GM12878 (cell line): ENCODE measurements at regions of chr3 and their contacts with region 1.

Region 1: GRCh38 chr3:28328188-28329151 is 20.1 kb upstream of the ZCWPW2 start:
- DNase-seq: no peak
- ATAC-seq: peak; percentile 32; the same call in 2 of the 3 replicates
- H3K4me3 ChIP-seq: no peak overlapping the region
- H3K27ac ChIP-seq: no peak overlapping the region
- H3K4me1 ChIP-seq: no peaks in the 10 kb centered on the region
- H3K27me3 ChIP-seq: no peaks in the 10 kb centered on the region
- CTCF ChIP-seq: peak in 2 of 3 experiments; percentile 28 to 60; a peak in 4 of 6 replicates
- EP300 ChIP-seq: no peak
- POLR2A ChIP-seq: no peak
- RAD21 ChIP-seq: peak; percentile 49

Region 2: DNA sequence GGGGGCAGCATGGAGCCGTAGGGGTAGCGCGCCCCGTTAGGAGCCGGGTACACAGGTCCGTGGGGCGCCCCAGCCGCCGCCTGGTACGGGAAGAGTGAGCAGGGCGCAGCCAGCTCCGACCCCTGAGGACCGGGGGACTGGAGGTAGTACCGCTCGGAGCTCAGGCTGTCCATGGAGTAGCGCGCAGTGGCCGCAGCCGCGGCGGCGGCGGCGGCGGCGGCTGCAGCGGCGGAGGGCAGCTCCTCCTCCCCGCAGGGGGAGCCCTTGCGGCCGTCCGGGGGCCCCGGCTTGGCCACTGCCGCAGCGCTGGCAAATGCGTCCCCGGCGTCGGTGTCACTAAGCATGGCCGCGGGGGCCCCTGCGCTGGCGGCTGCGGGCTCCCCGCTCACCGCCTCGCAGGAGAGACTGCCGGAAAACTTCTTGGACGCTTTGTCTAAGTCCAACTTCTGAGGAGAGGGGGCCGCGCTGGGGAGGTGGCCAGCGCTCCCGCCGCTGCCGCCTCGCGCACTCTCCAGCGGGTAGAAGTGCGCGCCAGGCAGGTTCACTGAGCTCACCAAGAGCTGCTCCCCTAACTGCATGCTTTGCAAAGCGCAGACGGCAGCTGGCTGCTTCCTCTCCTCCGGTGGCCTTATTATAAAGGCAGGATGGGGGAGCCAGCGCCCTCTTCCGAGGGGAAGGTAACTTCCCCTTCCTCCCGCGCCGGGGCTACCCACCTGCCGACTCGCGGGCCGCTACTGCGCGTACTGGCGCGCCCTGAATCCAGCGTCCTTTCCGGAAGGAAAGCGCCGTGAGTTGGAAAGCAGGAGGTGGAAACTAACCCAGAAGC is 606.5 kb before region 1 on chr3 and contains the start of gene EOMES:
- CTCF ChIA-PET with region 1: interaction called, 122 read pairs
- POLR2A ChIA-PET with region 1: interaction called, 19 read pairs
- RAD21 ChIA-PET with region 1: interaction called, 170 read pairs
- SMC1A ChIA-PET with region 1: interaction called, 139 read pairs
- in situ Hi-C with region 1: no loop called
- intact Hi-C with region 1: no loop called
- DNase-seq: no peak
- ATAC-seq: peak; percentile 65
- H3K4me3 ChIP-seq: peak within 1 kb of the TSS; percentile 44; the same call in 1 of the 2 replicates
- H3K27ac ChIP-seq: no peak within 1 kb of the TSS
- H3K4me1 ChIP-seq: no peaks in the 10 kb centered on the region
- H3K27me3 ChIP-seq: peaks cover 2 to 14% of the 10 kb centered on the region in 2 experiments
- CTCF ChIP-seq: peak; percentile 10 to 61 (median 52); a peak in 5 of 6 replicates
- EP300 ChIP-seq: no peak
- POLR2A ChIP-seq: no peak
- RAD21 ChIP-seq: no peak
- polyA plus RNA-seq, gene EOMES: 1.5 to 2.8 TPM

Region 3: DNA sequence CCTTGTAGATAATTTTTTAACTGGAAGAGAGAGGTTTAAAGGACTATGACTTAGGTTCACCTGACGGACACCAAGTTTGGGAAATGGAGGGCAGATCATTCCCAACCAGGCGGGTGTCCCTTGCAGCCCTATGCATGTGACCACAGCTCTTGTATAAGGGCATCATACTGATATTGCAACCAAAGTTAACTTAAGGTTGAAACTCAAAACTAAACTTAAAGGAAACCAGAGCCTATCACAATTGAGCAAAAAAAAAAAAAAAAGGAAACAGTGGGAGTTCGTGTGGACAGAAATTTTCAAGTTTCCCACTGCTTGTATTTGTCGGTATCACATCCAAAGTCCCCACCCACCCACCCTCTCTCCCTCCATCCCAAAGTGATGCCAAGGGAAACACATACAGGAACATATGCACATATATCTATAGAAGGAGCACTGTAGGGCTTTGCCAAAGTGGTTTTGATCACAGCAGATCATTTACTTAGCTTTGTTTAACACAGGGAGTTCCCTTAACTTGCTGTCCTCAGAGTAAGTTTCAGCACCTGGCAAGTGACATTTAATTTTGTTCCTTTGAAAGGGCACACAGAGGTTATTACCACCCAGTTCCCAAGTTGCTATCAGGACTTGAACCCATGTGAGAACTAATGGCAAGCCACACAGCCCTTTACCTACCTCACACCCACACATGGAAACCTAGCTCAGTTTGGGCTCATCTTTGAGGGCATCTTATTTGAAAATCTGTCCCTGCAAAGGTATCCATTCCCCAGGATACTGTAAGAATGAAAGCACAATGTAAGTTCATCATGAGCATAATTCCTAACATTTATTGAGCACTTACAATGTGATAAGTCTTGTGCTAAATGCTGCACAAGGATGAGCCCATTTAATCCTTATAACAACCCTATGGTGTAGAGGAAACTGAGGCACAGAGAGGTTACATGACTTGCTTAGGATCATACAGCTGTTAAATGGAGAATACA is 291.6 kb before region 1 on chr3:
- CTCF ChIA-PET with region 1: interaction called, 5 read pairs
- POLR2A ChIA-PET with region 1: interaction called, 5 read pairs
- RAD21 ChIA-PET with region 1: interaction called, 5 read pairs
- SMC1A ChIA-PET with region 1: interaction called, 19 read pairs
- in situ Hi-C with region 1: no loop called
- intact Hi-C with region 1: no loop called
- DNase-seq: no peak
- ATAC-seq: peak; percentile 83
- H3K4me3 ChIP-seq: no peak overlapping the region
- H3K27ac ChIP-seq: no peak overlapping the region
- H3K4me1 ChIP-seq: no peaks in the 10 kb centered on the region
- H3K27me3 ChIP-seq: no peaks in the 10 kb centered on the region
- CTCF ChIP-seq: no peak
- EP300 ChIP-seq: peak in 1 of 2 experiments; percentile 34; a peak in 1 of 4 replicates
- POLR2A ChIP-seq: no peak
- RAD21 ChIP-seq: no peak

Region 4: DNA sequence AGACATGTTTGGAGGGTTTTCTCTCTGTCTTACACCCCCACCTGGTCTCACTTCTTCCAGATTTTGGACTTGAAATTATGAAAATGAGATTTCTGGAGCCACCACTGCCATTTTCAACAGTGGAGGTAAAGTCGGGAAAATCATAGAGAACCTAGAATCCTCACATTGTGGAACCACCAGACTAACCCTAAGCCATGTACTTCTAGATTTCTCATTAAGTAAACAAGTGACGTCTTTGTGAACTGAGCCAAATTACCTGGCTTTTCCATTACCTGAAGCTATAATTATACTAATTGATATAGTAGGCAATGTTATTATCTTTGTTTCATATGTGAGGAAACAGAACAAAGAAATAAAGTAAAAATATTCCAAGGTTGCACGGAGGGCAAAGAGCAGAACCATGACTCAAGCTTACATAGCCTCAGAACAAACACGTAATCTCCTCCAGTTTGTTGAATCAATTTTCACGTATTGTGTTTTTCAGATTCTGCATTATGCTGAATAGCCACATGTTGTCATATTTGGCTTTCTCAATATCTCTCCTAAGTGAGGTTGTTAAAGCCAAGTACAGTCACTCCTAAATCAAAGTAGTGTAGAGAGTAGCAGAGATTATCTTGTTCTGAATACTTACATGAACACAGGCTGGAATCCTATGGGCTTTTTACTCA is 188.4 kb before region 1 on chr3:
- CTCF ChIA-PET with region 1: no interaction called
- POLR2A ChIA-PET with region 1: no interaction called
- RAD21 ChIA-PET with region 1: interaction called, 23 read pairs
- SMC1A ChIA-PET with region 1: interaction called, 12 read pairs
- in situ Hi-C with region 1: no loop called
- intact Hi-C with region 1: no loop called
- DNase-seq: no peak
- ATAC-seq: peak; percentile 6
- H3K4me3 ChIP-seq: no peak overlapping the region
- H3K27ac ChIP-seq: no peak overlapping the region
- H3K4me1 ChIP-seq: no peaks in the 10 kb centered on the region
- H3K27me3 ChIP-seq: no peaks in the 10 kb centered on the region
- CTCF ChIP-seq: no peak
- EP300 ChIP-seq: no peak
- POLR2A ChIP-seq: no peak
- RAD21 ChIP-seq: no peak

Region 5: DNA sequence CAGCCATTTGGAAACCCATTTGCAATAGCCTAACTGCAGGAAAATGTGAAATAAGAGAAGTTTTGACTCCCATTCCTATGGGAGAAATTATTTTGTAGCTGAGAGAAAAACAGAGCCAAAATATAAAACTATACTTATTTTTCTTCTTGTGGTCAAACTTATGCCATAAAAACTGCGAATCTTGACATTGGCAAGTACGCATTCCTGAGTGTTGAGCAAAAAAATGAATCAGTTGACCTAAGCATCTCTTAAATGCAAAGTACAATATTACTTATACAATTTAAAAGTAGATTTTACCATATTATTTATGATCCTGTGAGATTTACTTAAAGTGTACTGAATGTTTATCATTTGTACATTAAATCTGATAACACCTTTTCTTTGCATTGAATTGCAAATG is 137.1 kb before region 1 on chr3:
- CTCF ChIA-PET with region 1: no interaction called
- POLR2A ChIA-PET with region 1: no interaction called
- RAD21 ChIA-PET with region 1: no interaction called
- SMC1A ChIA-PET with region 1: no interaction called
- in situ Hi-C with region 1: no loop called
- intact Hi-C with region 1: no loop called
- DNase-seq: no peak
- ATAC-seq: no peak
- H3K4me3 ChIP-seq: no peak overlapping the region
- H3K27ac ChIP-seq: no peak overlapping the region
- H3K4me1 ChIP-seq: no peaks in the 10 kb centered on the region
- H3K27me3 ChIP-seq: no peaks in the 10 kb centered on the region
- CTCF ChIP-seq: no peak
- EP300 ChIP-seq: no peak
- POLR2A ChIP-seq: no peak
- RAD21 ChIP-seq: no peak

Region 6: DNA sequence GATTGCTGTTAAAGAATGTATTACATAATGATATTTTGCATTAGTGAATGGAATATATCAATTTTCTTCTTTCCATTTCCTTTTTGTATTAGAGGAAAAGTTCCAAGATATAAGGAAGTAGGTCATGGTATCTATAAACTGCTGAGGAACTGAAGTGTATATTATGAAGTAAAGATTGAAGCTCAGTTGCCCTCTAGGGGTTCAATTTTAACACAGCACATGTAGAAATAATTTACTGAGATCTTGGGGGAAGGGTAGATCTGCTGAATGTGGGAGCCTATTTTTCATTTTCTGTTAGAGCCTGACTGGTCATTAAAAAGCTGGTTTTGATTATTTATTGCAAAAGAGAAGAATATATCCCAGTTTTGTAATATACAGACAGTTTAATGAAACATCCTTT is 41.9 kb before region 1 on chr3:
- CTCF ChIA-PET with region 1: interaction called, 34 read pairs
- POLR2A ChIA-PET with region 1: no interaction called
- RAD21 ChIA-PET with region 1: interaction called, 62 read pairs
- SMC1A ChIA-PET with region 1: interaction called, 37 read pairs
- in situ Hi-C with region 1: no loop called
- intact Hi-C with region 1: loop called (anchors 2 kb)
- DNase-seq: peak; percentile 8
- ATAC-seq: peak; percentile 96
- H3K4me3 ChIP-seq: no peak overlapping the region
- H3K27ac ChIP-seq: no peak overlapping the region
- H3K4me1 ChIP-seq: no peaks in the 10 kb centered on the region
- H3K27me3 ChIP-seq: no peaks in the 10 kb centered on the region
- CTCF ChIP-seq: peak; percentile 48 to 63 (median 50); a peak in 5 of 6 replicates
- EP300 ChIP-seq: no peak
- POLR2A ChIP-seq: no peak
- RAD21 ChIP-seq: peak; percentile 73

Region 7: GRCh38 chr3:28343144-28343543 is 14.7 kb after region 1 on chr3:
- CTCF ChIA-PET with region 1: interaction called, 47 read pairs
- POLR2A ChIA-PET with region 1: interaction called, 12 read pairs
- RAD21 ChIA-PET with region 1: interaction called, 44 read pairs
- SMC1A ChIA-PET with region 1: interaction called, 37 read pairs
- in situ Hi-C with region 1: no loop called
- intact Hi-C with region 1: no loop called
- DNase-seq: no peak
- ATAC-seq: peak; percentile 13
- H3K4me3 ChIP-seq: no peak overlapping the region
- H3K27ac ChIP-seq: no peak overlapping the region
- H3K4me1 ChIP-seq: no peaks in the 10 kb centered on the region
- H3K27me3 ChIP-seq: no peaks in the 10 kb centered on the region
- CTCF ChIP-seq: no peak
- EP300 ChIP-seq: no peak
- POLR2A ChIP-seq: no peak
- RAD21 ChIP-seq: no peak